Stomach (tissue), 19 donors: ENCODE measurements at regions of chr4 and their contacts with region 1.

Region 1: GRCh38 chr4:37802068-37802666 is 24.3 kb upstream of the PGM2 start:
- DNase-seq: peak; percentile 64 to 90
- H3K4me3 ChIP-seq: no peak overlapping the region
- H3K27ac ChIP-seq: no peak overlapping the region
- H3K4me1 ChIP-seq: peaks cover 0 to 4% (median 0%) of the 10 kb centered on the region in 4 donors
- H3K27me3 ChIP-seq: no peaks in the 10 kb centered on the region
- CTCF ChIP-seq: peak in 5 of 7 experiments; percentile 52 to 89 (median 56)
- EP300 ChIP-seq: no peak
- POLR2A ChIP-seq: no peak

Region 2: GRCh38 chr4:37653601-37654000 is 148.6 kb before region 1 on chr4:
- intact Hi-C with region 1: no loop called
- DNase-seq: no peak
- H3K4me3 ChIP-seq: no peak overlapping the region
- H3K27ac ChIP-seq: peak overlapping the region in 1 of 5 donors; percentile 0
- H3K4me1 ChIP-seq: peaks cover 15 to 50% (median 24%) of the 10 kb centered on the region in 4 donors
- H3K27me3 ChIP-seq: no peaks in the 10 kb centered on the region
- CTCF ChIP-seq: no peak
- EP300 ChIP-seq: no peak
- POLR2A ChIP-seq: no peak

Region 3: DNA sequence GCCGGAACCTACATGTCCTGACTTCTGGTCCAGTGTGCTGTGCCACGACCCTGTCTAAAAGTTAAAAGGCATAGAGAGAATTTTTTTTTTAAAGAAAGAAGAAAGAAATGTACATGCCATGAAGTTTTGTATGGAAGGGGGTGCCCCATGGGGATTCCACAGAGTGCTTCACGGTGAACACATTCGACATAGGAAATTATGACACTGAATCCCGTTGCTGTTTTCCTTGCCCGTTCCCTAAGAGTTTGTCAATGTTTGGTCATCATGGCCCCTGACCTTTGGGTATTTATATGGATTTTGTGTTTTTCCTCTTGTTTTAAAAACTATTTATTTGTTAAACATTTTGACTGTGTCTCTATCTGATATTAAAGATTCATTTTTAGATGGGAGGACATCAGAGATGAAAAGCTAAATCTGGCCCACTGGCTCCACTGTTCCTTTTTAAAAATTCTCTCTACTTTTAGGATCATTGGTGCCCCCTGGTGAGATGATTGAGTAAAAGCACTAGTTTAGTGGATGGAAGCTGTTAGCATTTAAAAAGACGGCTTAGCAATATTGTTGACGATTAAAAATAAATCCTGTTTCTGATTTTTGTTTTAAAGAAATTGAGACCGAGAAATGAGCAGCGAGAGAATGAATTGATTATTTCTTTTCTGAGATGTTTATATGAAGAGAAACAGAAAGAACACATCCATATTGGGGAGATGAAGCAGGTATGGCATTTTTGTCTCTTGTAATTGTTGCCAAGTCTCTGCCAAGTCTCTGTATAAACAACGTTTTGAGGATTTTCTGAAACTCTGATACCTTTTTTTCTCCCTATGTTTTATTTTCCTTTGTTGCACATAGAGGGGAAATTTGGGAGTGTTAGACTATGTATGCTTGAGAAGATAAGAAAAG is 233.1 kb after region 1 on chr4:
- intact Hi-C with region 1: loop called (anchors 10 kb)
- DNase-seq: peak in 1 of 2 donors; percentile 86
- H3K4me3 ChIP-seq: no peak overlapping the region
- H3K27ac ChIP-seq: peak overlapping the region in 2 of 5 donors; percentile 16 to 31
- H3K4me1 ChIP-seq: peaks cover 0 to 14% (median 7%) of the 10 kb centered on the region in 4 donors
- H3K27me3 ChIP-seq: no peaks in the 10 kb centered on the region
- CTCF ChIP-seq: peak in 5 of 7 experiments; percentile 28 to 72 (median 63)
- EP300 ChIP-seq: no peak
- POLR2A ChIP-seq: no peak

Region 4: DNA sequence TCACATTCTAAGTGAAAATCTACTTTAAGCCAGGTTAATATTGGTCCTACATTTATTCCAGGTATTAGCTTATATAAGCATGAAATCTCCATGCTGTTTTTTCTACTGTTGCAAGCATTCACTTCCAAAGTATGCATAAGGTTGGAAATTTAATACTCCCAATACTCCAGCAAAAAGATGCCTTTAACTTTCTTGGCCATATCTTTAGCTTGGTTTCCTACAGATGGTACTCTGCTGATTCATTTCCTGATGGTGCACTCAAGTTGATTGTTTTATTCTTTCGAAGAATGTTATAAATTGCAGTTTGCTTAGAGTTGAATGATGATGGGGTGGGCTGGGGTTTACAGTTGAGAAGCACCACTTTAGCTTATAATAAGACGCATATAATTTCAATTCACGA is 488.2 kb after region 1 on chr4:
- intact Hi-C with region 1: no loop called
- DNase-seq: no peak
- H3K4me3 ChIP-seq: no peak overlapping the region
- H3K27ac ChIP-seq: no peak overlapping the region
- H3K4me1 ChIP-seq: no peaks in the 10 kb centered on the region
- H3K27me3 ChIP-seq: no peaks in the 10 kb centered on the region
- CTCF ChIP-seq: no peak
- EP300 ChIP-seq: no peak
- POLR2A ChIP-seq: no peak